A673 (cell line): ENCODE measurements at regions of chr5 and their contacts with region 1.

Region 1: DNA sequence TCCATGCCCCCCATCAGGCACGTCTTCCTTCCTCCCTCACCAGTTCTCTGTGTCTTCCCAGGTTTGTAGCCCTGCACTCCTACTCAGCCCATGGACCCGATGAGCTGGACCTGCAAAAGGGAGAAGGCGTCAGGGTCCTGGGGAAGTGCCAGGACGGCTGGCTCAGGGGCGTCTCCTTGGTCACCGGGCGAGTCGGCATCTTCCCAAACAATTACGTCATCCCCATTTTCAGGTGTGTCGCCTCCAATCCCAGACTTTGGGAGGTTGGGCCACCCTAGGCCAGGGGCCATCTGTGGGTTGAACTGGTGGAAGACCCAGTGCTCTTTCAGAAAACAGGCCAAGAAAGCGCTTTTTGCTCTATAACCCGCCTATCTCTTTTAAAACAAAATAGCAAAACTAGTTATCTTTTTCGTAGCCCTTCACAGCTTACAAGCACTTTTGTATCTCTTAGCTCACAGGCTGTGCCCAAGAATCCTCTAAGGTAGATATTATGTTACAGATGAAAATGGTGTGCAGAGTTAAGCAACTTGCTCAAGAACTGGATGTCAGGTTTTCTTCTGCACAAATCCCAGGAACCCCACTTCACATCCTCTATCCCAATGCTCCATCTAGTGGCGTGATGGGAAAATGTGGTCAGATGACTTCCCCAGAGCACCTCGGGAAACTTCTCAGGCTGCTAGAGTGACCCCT is 56.2 kb downstream of the PLAC8L1 start:
- DNase-seq: peak; percentile 91
- H3K4me3 ChIP-seq: no peak overlapping the region
- H3K27ac ChIP-seq: peak overlapping the region; percentile 64
- H3K4me1 ChIP-seq: peaks cover 34% of the 10 kb centered on the region
- H3K27me3 ChIP-seq: no peaks in the 10 kb centered on the region
- CTCF ChIP-seq: peak; percentile 79

Region 2: DNA sequence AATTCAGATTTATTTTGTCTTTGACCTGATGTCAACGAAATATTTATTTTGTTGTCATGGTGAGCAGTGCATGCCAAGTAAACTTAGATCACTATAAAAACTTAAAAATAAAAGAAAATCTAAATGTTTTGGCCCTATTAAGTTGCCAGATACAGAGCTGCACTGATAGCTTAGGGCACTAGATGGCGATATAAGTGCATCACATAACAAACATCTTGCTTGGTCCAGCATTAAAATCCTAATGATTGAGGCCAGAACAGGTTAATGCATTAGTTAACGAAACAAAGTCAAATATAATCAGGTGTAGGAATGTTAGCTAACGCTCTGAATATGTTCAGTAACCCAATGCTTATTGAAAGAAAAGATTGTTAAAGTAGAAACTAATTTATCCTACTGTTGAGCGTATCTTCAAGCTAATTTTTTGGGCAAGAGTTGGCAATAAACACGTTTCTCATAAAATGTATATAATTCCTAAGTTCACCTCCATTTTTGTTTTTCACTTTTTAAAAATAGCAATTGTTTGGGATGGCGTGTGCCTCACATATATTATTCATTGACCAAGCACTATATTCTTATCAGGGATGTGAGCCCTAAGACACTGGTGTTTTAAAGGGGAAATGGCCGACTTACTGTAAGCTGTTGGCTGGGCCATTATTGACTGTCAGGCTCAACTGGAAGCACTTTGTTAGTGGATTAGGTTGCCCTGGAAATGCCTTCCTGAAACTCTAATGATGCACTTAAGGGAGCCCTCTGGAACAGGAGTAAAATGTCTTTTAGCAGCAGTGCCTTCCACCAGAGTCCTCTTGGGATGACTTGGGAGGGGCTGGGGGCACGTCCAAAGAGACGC is 1845.2 kb before region 1 on chr5:
- CTCF ChIA-PET with region 1: interaction called, 3 read pairs
- POLR2A ChIA-PET with region 1: no interaction called
- intact Hi-C with region 1: loop called (anchors 5 kb)
- DNase-seq: peak; percentile 70
- H3K4me3 ChIP-seq: no peak overlapping the region
- H3K27ac ChIP-seq: no peak overlapping the region
- H3K4me1 ChIP-seq: peaks cover 39% of the 10 kb centered on the region
- H3K27me3 ChIP-seq: no peaks in the 10 kb centered on the region
- CTCF ChIP-seq: peak; percentile 88

Region 3: DNA sequence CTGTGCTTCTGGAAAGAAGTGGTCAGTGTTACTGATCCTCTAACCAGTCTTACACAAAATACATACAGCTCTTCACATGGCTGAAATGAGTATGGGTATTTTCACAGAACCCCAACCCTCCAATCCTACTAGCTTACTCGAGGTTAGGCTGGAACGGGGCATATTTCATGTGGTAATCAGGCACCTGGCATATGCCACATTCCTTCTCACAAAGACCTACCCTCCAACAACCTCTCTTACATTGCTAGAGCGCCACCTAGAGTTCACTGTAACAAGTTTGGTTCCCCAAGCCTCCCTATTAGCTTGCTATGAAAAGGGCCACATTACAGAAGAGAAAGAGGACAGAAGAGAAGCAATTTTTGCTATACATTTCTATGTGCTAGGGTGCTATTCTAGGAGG is 811.3 kb before region 1 on chr5:
- CTCF ChIA-PET with region 1: no interaction called
- POLR2A ChIA-PET with region 1: no interaction called
- intact Hi-C with region 1: loop called (anchors 5 kb)
- DNase-seq: peak; percentile 90
- H3K4me3 ChIP-seq: no peak overlapping the region
- H3K27ac ChIP-seq: no peak overlapping the region
- H3K4me1 ChIP-seq: peaks cover 53% of the 10 kb centered on the region
- H3K27me3 ChIP-seq: no peaks in the 10 kb centered on the region
- CTCF ChIP-seq: peak; percentile 89

Region 4: GRCh38 chr5:145591578-145591977 is 457.6 kb before region 1 on chr5:
- CTCF ChIA-PET with region 1: no interaction called
- POLR2A ChIA-PET with region 1: no interaction called
- intact Hi-C with region 1: no loop called
- DNase-seq: no peak
- H3K4me3 ChIP-seq: no peak overlapping the region
- H3K27ac ChIP-seq: no peak overlapping the region
- H3K4me1 ChIP-seq: peaks cover 17% of the 10 kb centered on the region
- H3K27me3 ChIP-seq: no peaks in the 10 kb centered on the region
- CTCF ChIP-seq: no peak

Region 5: GRCh38 chr5:145681686-145682085 is 367.5 kb before region 1 on chr5:
- CTCF ChIA-PET with region 1: no interaction called
- POLR2A ChIA-PET with region 1: no interaction called
- intact Hi-C with region 1: loop called (anchors 2 kb)
- DNase-seq: peak; percentile 89
- H3K4me3 ChIP-seq: no peak overlapping the region
- H3K27ac ChIP-seq: no peak overlapping the region
- H3K4me1 ChIP-seq: peaks cover 26% of the 10 kb centered on the region
- H3K27me3 ChIP-seq: no peaks in the 10 kb centered on the region
- CTCF ChIP-seq: peak; percentile 89

Region 6: GRCh38 chr5:145697251-145697990 is 351.7 kb before region 1 on chr5:
- CTCF ChIA-PET with region 1: no interaction called
- POLR2A ChIA-PET with region 1: interaction called, 10 read pairs
- intact Hi-C with region 1: no loop called
- DNase-seq: peak; percentile 67
- H3K4me3 ChIP-seq: no peak overlapping the region
- H3K27ac ChIP-seq: no peak overlapping the region
- H3K4me1 ChIP-seq: peaks cover 4% of the 10 kb centered on the region
- H3K27me3 ChIP-seq: no peaks in the 10 kb centered on the region
- CTCF ChIP-seq: peak; percentile 72

Region 7: GRCh38 chr5:145834917-145835847 is 214.0 kb before region 1 on chr5 and contains the start of gene PRELID2:
- CTCF ChIA-PET with region 1: no interaction called
- POLR2A ChIA-PET with region 1: no interaction called
- intact Hi-C with region 1: loop called (anchors 2 kb)
- DNase-seq: peak; percentile 96
- H3K4me3 ChIP-seq: peak within 1 kb of the TSS; percentile 66
- H3K27ac ChIP-seq: peak within 1 kb of the TSS; percentile 77
- H3K4me1 ChIP-seq: peaks cover 25% of the 10 kb centered on the region
- H3K27me3 ChIP-seq: no peaks in the 10 kb centered on the region
- CTCF ChIP-seq: no peak
- total RNA-seq, gene PRELID2: 50.2 and 55.8 TPM in 2 replicates

Region 8: GRCh38 chr5:145908205-145908945 is 140.8 kb before region 1 on chr5:
- CTCF ChIA-PET with region 1: no interaction called
- POLR2A ChIA-PET with region 1: no interaction called
- intact Hi-C with region 1: no loop called
- DNase-seq: no peak
- H3K4me3 ChIP-seq: no peak overlapping the region
- H3K27ac ChIP-seq: no peak overlapping the region
- H3K4me1 ChIP-seq: no peaks in the 10 kb centered on the region
- H3K27me3 ChIP-seq: no peaks in the 10 kb centered on the region
- CTCF ChIP-seq: peak; percentile 40; the same call in 1 of the 2 replicates

Region 9: DNA sequence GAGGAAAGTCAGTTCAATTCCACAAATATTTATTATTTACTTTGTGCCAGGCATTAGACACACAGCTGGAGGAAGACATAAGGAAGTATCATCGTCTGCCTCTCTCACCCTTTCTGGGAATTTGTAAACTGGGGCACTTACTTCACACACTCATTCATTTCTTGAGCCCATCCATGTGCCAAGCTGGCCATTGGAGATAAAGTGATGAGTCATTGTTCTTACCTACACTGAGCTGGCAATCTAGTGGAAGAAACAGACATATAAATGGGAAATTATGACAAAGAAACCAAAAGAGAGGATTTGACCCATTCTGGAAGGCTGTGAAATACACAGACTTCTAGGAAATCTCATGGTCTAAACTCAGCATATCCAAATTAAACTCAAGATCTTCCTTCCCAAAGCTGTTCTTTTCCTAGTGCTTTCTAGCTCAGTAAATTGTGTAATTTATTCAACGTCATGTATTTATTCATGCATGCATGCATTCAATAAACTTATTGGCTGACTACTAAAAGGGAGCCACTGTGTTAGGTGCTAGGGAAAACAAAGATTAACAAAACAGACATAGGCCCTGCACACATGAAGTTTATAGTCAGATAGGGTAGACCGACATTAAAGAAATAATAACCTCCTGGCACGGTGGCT is 47.5 kb before region 1 on chr5:
- CTCF ChIA-PET with region 1: no interaction called
- POLR2A ChIA-PET with region 1: interaction called, 4 read pairs
- intact Hi-C with region 1: loop called (anchors 1 kb)
- DNase-seq: peak; percentile 92
- H3K4me3 ChIP-seq: no peak overlapping the region
- H3K27ac ChIP-seq: peak overlapping the region; percentile 99
- H3K4me1 ChIP-seq: peaks cover 80% of the 10 kb centered on the region
- H3K27me3 ChIP-seq: no peaks in the 10 kb centered on the region
- CTCF ChIP-seq: no peak

Region 10: GRCh38 chr5:146111409-146111808 is 62.2 kb after region 1 on chr5:
- CTCF ChIA-PET with region 1: no interaction called
- POLR2A ChIA-PET with region 1: no interaction called
- intact Hi-C with region 1: no loop called
- DNase-seq: no peak
- H3K4me3 ChIP-seq: no peak overlapping the region
- H3K27ac ChIP-seq: no peak overlapping the region
- H3K4me1 ChIP-seq: peaks cover 2% of the 10 kb centered on the region
- H3K27me3 ChIP-seq: no peaks in the 10 kb centered on the region
- CTCF ChIP-seq: no peak